Left cardiac atrium (tissue), 4 donors: ENCODE measurements at regions of chr3 and their contacts with region 1.

Region 1: DNA sequence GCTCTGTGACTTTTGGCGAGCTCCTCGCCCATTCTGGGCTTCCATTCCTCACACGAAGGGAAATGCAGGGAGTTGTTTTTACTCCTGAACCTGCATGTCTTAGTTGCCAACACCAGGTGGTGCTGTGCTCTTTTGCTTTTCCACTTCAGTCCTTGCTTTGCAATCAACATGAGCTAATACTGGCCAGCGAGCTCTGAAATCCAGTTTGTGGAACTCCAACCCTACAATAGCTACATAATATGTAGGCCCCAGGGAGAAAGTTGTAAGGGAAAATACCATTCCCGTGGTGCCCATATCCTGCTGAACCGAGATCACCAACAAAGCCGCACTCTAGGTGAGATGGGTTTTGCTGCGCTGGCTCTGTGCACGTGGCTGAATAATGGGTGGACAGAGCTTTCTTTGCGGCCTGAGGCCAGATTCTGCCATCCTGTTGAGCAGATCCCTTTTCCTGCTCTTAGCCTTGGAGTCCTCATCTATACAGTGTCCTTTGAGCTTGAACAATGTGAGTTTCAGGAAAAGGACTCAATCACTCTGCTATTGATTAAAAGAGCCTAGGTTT is 25.0 kb downstream of the LSM3 start:
- DNase-seq: peak; percentile 63
- ATAC-seq: peak; percentile 79 to 80

Region 2: GRCh38 chr3:14234251-14235002 is 30.8 kb after region 1 on chr3:
- intact Hi-C with region 1: loop called in 1 of 2 experiments (anchors 2 kb)
- DNase-seq: peak; percentile 72
- ATAC-seq: peak; percentile 38 to 78

Region 3: DNA sequence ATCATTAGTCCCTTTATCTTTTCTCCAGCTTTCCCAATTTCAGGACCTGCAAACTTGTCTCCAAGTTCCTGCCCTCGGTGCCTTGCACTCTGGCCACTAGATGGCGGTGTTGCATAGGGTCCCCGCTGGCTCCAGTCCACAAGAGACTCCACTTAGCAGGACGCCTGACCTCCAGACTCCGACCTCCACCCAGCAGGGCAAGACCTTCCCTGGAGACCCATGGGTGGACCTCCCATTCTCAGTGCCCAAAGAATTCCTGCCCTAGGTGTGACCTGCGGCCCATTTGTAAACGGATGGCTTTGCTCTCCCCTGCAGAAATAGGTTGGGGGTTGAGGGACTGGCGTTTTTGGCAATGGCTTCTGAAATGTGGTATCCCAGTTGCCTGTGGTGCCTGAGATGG is 57.6 kb after region 1 on chr3:
- intact Hi-C with region 1: loop called in 1 of 2 experiments (anchors 5 kb)
- DNase-seq: peak; percentile 84
- ATAC-seq: peak; percentile 86 to 88

Region 4: GRCh38 chr3:14467814-14468620 is 264.4 kb after region 1 on chr3:
- intact Hi-C with region 1: loop called (anchors 2 to 5 kb)
- DNase-seq: no peak
- ATAC-seq: peak; percentile 46 to 58

Region 5: DNA sequence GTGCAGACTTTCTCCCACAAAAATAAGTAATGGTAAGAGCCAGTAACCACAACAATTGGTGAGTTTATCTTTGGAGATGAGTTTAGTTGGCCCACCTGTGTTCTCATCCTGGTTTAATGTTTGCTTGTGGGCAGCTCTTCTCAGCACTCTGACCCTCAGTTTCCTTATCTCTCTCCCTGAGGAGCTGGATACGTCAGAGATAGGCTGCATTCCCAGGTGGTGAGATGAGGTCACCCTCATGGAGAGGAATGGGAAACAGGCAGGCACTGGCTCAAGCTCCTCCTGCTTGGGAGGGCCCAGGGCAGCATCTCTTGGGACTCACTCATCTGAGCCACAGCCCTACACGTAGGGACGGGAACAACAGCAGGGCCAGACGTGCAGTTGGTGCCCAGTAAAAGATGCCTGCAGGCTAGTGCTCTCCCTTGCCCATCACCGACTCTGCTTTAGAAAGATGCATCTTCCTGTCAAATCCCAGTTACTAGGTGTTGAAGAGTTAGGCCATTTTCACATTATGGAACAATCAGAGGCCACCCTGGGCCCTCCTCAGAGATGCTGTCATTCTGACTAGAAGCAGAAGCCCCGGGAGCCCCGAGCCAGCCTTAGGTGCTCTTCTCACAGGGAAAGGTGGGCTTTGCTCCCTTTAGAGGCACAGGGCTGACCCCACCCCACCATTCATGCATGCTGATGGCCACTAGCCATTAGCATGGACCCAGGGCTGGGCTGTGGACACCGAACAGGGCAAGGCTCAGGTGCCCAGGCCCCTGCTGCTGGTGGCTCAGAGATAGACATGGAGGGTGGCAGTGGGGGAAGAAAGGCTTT is 276.8 kb after region 1 on chr3:
- intact Hi-C with region 1: no loop called
- DNase-seq: peak; percentile 75
- ATAC-seq: peak; percentile 46 to 90